ENCODE measurements at regions of chr4 and their contacts with region 1.

Region 1: DNA sequence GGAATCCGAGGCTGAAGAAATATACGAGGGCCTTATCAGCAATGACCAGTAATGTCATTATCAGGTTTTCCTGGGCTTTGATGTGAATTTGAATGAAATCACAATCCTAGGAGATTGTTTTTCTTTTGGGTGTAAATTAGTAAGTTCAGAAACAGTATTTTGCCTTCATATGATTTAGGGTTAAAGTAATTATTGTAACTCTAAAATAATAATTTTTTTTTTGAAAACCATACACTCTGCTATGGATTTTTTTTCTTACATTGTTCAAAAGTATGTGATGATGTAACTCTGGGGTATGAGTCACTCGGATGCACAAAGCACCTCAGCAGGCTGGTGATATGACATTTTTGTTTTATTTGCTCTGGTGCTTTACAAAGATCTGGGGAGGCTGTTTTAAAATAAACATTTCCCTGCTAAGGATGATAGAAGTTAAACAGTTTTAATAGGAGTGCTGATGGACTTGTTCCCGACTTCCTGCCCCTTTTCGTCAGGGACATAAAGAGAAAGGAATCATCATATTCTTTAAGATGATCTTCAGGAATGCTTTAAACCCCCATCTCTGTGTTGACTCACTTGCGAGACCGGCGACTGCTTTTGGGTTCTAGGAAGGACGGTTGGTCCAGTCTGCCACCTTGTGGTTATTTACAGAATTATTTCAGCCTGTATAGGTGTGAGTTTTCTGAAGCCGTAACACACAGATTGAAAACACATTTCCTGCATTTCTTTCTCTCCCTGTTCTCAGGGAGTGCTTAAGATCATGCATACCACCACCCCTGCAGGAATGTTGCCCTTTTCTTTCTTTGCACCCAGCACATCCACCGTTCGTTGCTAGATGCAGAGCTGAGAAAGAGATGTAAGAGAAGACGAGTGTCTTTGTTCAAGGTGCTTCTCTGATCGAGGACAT is 72.5 kb downstream of the RAPGEF2 start:
- DNase-seq: peak; percentile 5 to 81 (median 57)
- ATAC-seq: peak; percentile 97
- H3K4me3 ChIP-seq: no peak overlapping the region
- H3K4me3 Mint-ChIP-seq: no peak overlapping the region
- H3K27ac ChIP-seq: no peak overlapping the region
- H3K27ac Mint-ChIP-seq: no peak overlapping the region
- H3K4me1 ChIP-seq: peaks cover 7% of the 10 kb centered on the region
- H3K4me1 Mint-ChIP-seq: peaks cover 15% of the 10 kb centered on the region
- H3K27me3 ChIP-seq: peaks cover 0 to 3% of the 10 kb centered on the region in 2 experiments
- H3K27me3 Mint-ChIP-seq: no peaks in the 10 kb centered on the region
- CTCF ChIP-seq: peak; percentile 68

Region 2: DNA sequence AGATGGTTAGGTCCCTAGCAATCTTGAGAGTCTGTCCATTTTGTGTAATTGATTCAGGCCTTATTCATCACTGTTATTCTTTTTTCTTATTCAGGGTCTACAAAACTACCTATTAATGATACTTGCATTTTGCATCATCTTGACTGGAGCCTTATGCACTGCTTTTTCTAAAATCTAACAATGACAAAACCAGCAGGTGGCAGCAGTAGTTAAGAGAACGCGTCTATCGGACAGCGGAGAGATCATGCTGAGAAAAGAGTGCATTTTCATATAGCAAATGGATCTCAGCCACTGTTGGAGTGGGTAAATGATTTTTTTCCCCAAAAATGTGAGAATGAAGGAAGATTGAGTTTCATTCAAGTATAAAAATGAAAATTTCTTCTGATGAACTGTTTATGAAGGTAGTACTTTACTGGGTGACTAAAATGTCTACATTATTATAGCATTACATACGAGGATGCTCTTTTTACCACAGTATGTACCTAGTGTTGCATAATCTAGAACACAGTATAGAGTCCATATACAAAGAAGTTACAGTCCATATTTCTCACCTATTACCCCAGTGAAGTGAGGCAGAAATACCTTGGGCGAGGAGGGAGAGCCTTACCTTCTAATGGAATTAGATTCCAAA is 921.9 kb before region 1 on chr4:
- CTCF ChIA-PET with region 1: no interaction called
- POLR2A ChIA-PET with region 1: no interaction called
- intact Hi-C with region 1: loop called (anchors 2 kb)
- DNase-seq: peak in 5 of 9 experiments; percentile 23 to 56 (median 32)
- ATAC-seq: no peak
- H3K4me3 ChIP-seq: no peak overlapping the region
- H3K4me3 Mint-ChIP-seq: no peak overlapping the region
- H3K27ac ChIP-seq: no peak overlapping the region
- H3K27ac Mint-ChIP-seq: no peak overlapping the region
- H3K4me1 ChIP-seq: peaks cover 8% of the 10 kb centered on the region
- H3K4me1 Mint-ChIP-seq: peaks cover 8% of the 10 kb centered on the region
- H3K27me3 ChIP-seq: no peaks in the 10 kb centered on the region
- H3K27me3 Mint-ChIP-seq: peaks cover 5% of the 10 kb centered on the region
- CTCF ChIP-seq: peak; percentile 46

Region 3: GRCh38 chr4:158722917-158723793 is 452.2 kb before region 1 on chr4 and contains the start of gene PPID:
- CTCF ChIA-PET with region 1: interaction called, 3 read pairs
- POLR2A ChIA-PET with region 1: no interaction called
- intact Hi-C with region 1: loop called in 1 of 2 experiments (anchors 2 kb)
- DNase-seq: peak; percentile 52 to 91 (median 77)
- ATAC-seq: peak; percentile 84
- H3K4me3 ChIP-seq: peak within 1 kb of the TSS; percentile 83 to 94
- H3K4me3 Mint-ChIP-seq: peak within 1 kb of the TSS; percentile 97
- H3K27ac ChIP-seq: peak within 1 kb of the TSS; percentile 88 to 94
- H3K27ac Mint-ChIP-seq: peak within 1 kb of the TSS; percentile 97
- H3K4me1 ChIP-seq: peaks cover 19% of the 10 kb centered on the region
- H3K4me1 Mint-ChIP-seq: peaks cover 36% of the 10 kb centered on the region
- H3K27me3 ChIP-seq: no peaks in the 10 kb centered on the region
- H3K27me3 Mint-ChIP-seq: peaks cover 11% of the 10 kb centered on the region
- CTCF ChIP-seq: no peak
- total RNA-seq, gene PPID: 10.3 to 10.5 TPM

Region 4: DNA sequence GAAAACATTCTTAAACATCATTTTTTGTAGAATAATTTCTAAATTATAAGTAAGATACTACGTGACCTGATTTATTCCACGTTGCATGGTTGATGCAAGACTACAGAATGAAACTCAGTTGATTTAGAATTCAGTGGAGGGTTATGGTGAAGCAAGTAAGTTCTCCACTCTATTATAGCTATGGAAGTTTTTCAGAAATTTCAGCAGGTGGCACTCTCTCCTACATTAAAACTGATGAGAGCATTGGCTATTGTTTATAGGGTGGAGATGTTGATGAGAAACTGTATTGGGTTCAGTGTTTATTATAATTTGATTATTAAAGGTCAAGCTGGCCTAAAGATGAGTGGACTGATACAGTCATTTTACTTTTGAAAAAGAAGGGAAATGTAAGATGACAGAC is 318.5 kb before region 1 on chr4:
- CTCF ChIA-PET with region 1: interaction called, 8 read pairs
- POLR2A ChIA-PET with region 1: no interaction called
- intact Hi-C with region 1: loop called (anchors 1 kb)
- DNase-seq: peak in 2 of 9 experiments; percentile 49 to 56
- ATAC-seq: peak; percentile 64
- H3K4me3 ChIP-seq: no peak overlapping the region
- H3K4me3 Mint-ChIP-seq: no peak overlapping the region
- H3K27ac ChIP-seq: no peak overlapping the region
- H3K27ac Mint-ChIP-seq: no peak overlapping the region
- H3K4me1 ChIP-seq: no peaks in the 10 kb centered on the region
- H3K4me1 Mint-ChIP-seq: no peaks in the 10 kb centered on the region
- H3K27me3 ChIP-seq: no peaks in the 10 kb centered on the region
- H3K27me3 Mint-ChIP-seq: no peaks in the 10 kb centered on the region
- CTCF ChIP-seq: peak; percentile 40

Measured in CD8-positive, alpha-beta T cell (primary cell).